HCT116 (cell line): ENCODE measurements at regions of chr4 and their contacts with region 1.

Region 1: DNA sequence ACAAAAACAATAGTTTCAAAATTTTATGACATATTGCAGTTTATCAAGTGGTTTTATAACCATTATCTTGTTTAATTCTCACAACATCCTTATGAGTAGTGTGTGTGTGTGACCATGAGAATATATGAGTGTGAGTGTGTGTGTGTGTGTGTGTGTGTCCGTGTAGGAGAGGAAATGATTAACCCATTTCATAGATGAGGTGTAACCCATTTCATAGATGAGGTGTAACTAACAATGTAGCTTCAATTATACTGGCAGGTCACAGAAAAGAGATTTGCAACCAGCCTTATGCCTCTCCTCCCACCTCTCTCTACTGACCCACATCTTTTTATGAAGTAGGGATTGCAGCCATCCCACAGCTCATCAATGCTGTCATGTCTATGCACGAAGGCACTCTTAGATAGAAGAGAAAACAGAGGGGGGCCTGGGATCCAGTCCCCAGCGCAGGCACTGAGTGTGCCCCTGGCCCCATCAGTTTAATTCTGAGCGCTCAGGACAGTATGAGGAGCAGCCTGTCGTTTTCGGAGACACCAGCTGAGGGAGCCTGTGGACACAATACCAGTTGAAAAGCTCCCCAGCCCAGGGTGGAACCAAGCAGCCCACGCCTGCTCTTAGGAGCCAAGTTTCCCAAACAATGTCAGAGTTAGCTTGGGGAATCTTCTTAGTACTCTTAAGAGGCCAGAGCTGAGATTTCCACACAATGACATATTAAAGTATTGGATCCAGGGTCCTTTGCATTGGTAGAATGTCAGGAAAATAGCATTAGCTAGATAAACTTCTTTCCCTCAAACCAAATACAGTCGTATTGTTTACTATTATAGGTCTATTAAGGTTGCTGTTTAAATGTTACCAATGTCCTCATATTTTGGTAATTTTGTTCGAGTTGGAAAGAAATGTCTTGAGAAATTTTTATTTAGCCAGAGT is 88.6 kb downstream of the PALLD start:
- DNase-seq: peak; percentile 63
- ATAC-seq: peak; percentile 75
- H3K4me3 ChIP-seq: 0 out of 4 replicates have a peak overlapping the region, but pooled peaks of 1 of the 2 experiments have one; percentile 9
- H3K27ac ChIP-seq: peak overlapping the region; percentile 91
- H3K4me1 ChIP-seq: peaks cover 71 to 89% of the 10 kb centered on the region in 2 experiments
- H3K27me3 ChIP-seq: no peaks in the 10 kb centered on the region
- CTCF ChIP-seq: peak in 2 of 3 experiments; percentile 76 to 81; a peak in 4 of 6 replicates
- POLR2A ChIP-seq: no peak
- RAD21 ChIP-seq: no peak

Region 2: GRCh38 chr4:168183717-168184608 is 401.5 kb before region 1 on chr4:
- CTCF ChIA-PET with region 1: no interaction called
- POLR2A ChIA-PET with region 1: no interaction called
- RAD21 ChIA-PET with region 1: no interaction called
- intact Hi-C with region 1: loop called (anchors 2 kb)
- DNase-seq: peak; percentile 43
- ATAC-seq: peak; percentile 68
- H3K4me3 ChIP-seq: no peak overlapping the region
- H3K27ac ChIP-seq: peak overlapping the region; percentile 52; the same call in 1 of the 2 replicates
- H3K4me1 ChIP-seq: peaks cover 0 to 6% of the 10 kb centered on the region in 2 experiments; a peak in 2 of 4 replicates
- H3K27me3 ChIP-seq: no peaks in the 10 kb centered on the region
- CTCF ChIP-seq: peak; percentile 46 to 80 (median 73)
- POLR2A ChIP-seq: no peak
- RAD21 ChIP-seq: peak; percentile 90

Region 3: DNA sequence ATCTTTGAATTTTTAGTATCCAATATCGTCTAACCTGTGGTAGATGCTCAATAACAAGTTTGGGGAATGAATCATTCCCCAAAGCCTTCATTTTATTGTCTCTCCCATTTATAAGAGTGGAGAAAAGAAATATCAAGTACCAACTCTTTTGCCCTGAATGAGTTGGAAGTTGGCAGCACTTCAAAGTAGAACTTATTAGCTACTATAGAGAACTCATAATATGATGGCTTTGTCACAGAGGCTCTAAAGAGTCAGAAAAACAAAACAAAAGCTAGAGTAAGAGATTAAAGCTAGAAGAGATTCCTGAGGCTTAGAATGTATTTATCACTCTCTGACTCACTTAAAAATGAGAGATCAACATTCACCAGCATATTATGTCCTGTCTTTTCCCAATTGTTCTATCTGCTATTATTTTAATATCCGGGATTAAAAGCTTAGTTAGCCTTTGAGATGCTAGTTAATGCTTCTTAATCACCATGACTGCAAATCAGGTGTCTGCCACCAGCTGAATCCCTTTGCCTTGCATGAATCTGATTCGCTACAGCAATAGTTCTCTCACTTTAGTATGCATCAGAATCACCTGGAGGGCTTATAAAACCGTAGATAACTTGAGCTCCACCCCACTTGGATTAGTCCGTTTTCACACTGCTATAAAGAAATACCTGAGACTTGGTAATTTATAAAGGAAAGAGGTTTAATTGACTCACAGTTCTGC is 10.7 kb before region 1 on chr4:
- CTCF ChIA-PET with region 1: interaction called, 12 read pairs
- POLR2A ChIA-PET with region 1: interaction called, 10 read pairs
- RAD21 ChIA-PET with region 1: interaction called in 1 of 2 experiments, 3 read pairs
- intact Hi-C with region 1: no loop called
- DNase-seq: peak; percentile 95
- ATAC-seq: peak; percentile 82
- H3K4me3 ChIP-seq: peak overlapping the region in 1 of 2 experiments; percentile 4; a peak in 1 of 4 replicates
- H3K27ac ChIP-seq: peak overlapping the region; percentile 97
- H3K4me1 ChIP-seq: peaks cover 54 to 66% of the 10 kb centered on the region in 2 experiments
- H3K27me3 ChIP-seq: no peaks in the 10 kb centered on the region
- CTCF ChIP-seq: no peak
- POLR2A ChIP-seq: no peak
- RAD21 ChIP-seq: peak; percentile 20; the same call in 1 of the 2 replicates

Region 4: GRCh38 chr4:168631241-168632162 is 46.1 kb after region 1 on chr4:
- CTCF ChIA-PET with region 1: interaction called, 8 read pairs
- POLR2A ChIA-PET with region 1: interaction called, 4 read pairs
- RAD21 ChIA-PET with region 1: interaction called in 1 of 2 experiments, 3 read pairs
- intact Hi-C with region 1: loop called (anchors 2 kb)
- DNase-seq: no peak
- ATAC-seq: peak; percentile 66
- H3K4me3 ChIP-seq: peak overlapping the region; percentile 65 to 73
- H3K27ac ChIP-seq: peak overlapping the region; percentile 94
- H3K4me1 ChIP-seq: peaks cover 69 to 71% of the 10 kb centered on the region in 2 experiments
- H3K27me3 ChIP-seq: no peaks in the 10 kb centered on the region
- CTCF ChIP-seq: peak in 2 of 3 experiments; percentile 33 to 41; a peak in 3 of 6 replicates
- POLR2A ChIP-seq: no peak
- RAD21 ChIP-seq: no peak

Region 5: DNA sequence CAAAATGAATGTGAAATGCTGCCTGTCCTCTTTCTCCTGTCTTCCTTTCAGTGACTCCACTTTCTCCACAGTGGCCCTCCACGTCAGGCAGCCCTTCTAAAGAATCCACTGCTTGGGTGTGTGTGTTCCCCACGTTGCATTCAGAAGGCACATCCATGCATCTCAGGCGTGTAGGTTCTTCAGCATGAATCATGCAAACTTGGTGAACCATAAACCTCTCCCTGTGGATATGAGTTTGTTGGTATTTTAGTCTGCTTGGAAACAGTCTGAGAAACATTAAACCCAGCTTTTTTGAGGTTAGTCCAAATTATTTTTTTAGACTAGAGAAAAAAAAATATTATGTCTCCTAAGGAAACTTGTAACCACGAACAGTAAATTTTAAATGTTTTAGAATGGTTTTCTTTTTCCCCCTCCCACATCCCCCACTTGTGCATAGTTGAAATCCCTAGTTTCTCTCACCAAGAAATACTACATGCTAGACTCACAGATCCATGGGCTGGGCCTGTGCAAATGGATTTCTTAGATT is 173.0 kb after region 1 on chr4:
- CTCF ChIA-PET with region 1: no interaction called
- POLR2A ChIA-PET with region 1: no interaction called
- RAD21 ChIA-PET with region 1: no interaction called
- intact Hi-C with region 1: no loop called
- DNase-seq: no peak
- ATAC-seq: no peak
- H3K4me3 ChIP-seq: no peak overlapping the region
- H3K27ac ChIP-seq: no peak overlapping the region
- H3K4me1 ChIP-seq: peaks cover 3 to 40% of the 10 kb centered on the region in 2 experiments; a peak in 2 of 4 replicates
- H3K27me3 ChIP-seq: no peaks in the 10 kb centered on the region
- CTCF ChIP-seq: no peak
- POLR2A ChIP-seq: no peak
- RAD21 ChIP-seq: no peak

Region 6: GRCh38 chr4:168831919-168832762 is 246.7 kb after region 1 on chr4:
- CTCF ChIA-PET with region 1: no interaction called
- POLR2A ChIA-PET with region 1: interaction called, 3 read pairs
- RAD21 ChIA-PET with region 1: no interaction called
- intact Hi-C with region 1: loop called (anchors 5 kb)
- DNase-seq: peak; percentile 32
- ATAC-seq: peak; percentile 81
- H3K4me3 ChIP-seq: peak overlapping the region; percentile 93 to 96
- H3K27ac ChIP-seq: peak overlapping the region; percentile 67
- H3K4me1 ChIP-seq: peaks cover 22 to 28% of the 10 kb centered on the region in 2 experiments; a peak in 3 of 4 replicates
- H3K27me3 ChIP-seq: no peaks in the 10 kb centered on the region
- CTCF ChIP-seq: no peak
- POLR2A ChIP-seq: peak; percentile 90
- RAD21 ChIP-seq: no peak; the same call in 1 of the 2 replicates

Region 7: GRCh38 chr4:168917138-168917779 is 331.8 kb after region 1 on chr4:
- CTCF ChIA-PET with region 1: interaction called, 16 read pairs
- POLR2A ChIA-PET with region 1: no interaction called
- RAD21 ChIA-PET with region 1: interaction called in 1 of 2 experiments, 6 read pairs
- intact Hi-C with region 1: loop called (anchors 1 kb)
- DNase-seq: peak; percentile 22
- ATAC-seq: peak; percentile 68
- H3K4me3 ChIP-seq: no peak overlapping the region
- H3K27ac ChIP-seq: peak overlapping the region; percentile 25; the same call in 1 of the 2 replicates
- H3K4me1 ChIP-seq: peaks cover 0 to 6% of the 10 kb centered on the region in 2 experiments; a peak in 2 of 4 replicates
- H3K27me3 ChIP-seq: no peaks in the 10 kb centered on the region
- CTCF ChIP-seq: peak; percentile 44 to 56 (median 54); a peak in 5 of 6 replicates
- POLR2A ChIP-seq: no peak
- RAD21 ChIP-seq: peak; percentile 76

Region 8: DNA sequence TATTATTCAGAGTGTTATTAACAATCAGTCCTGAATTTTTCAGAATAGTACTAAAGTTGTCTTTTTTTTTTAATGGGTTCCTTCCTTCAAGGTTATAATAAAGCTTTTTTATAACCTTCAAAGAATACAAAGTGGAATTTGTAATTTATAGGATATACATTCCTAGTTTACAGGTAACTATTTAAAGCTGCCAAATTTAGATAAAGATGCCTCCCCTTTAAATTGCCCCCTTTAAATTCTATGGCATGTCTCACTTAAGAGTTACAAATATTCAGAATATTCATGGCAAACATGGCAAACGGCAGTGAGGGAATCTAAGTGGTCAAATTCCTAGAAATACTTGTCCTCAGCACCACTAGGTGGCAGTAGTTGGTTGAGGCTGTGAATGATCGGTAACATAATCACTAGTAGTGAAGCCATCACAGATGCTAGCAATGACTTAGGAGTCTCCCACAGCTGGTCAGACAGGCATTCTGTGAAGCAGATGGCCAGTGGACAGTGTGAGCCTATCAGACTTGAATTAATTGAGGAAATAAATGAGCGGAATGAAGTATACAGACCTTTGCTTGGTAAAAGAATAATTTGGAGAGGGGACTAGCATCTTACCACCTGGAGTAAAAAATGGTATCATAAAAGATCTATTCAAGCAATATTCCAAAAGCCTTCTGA is 338.2 kb after region 1 on chr4:
- CTCF ChIA-PET with region 1: interaction called, 16 read pairs
- POLR2A ChIA-PET with region 1: no interaction called
- RAD21 ChIA-PET with region 1: interaction called in 1 of 2 experiments, 6 read pairs
- intact Hi-C with region 1: no loop called
- DNase-seq: peak; percentile 61
- ATAC-seq: peak; percentile 84
- H3K4me3 ChIP-seq: no peak overlapping the region
- H3K27ac ChIP-seq: peak overlapping the region; percentile 17; the same call in 1 of the 2 replicates
- H3K4me1 ChIP-seq: no peaks in the 10 kb centered on the region
- H3K27me3 ChIP-seq: no peaks in the 10 kb centered on the region
- CTCF ChIP-seq: peak; percentile 63 to 83 (median 74)
- POLR2A ChIP-seq: no peak
- RAD21 ChIP-seq: peak; percentile 78